ENCODE measurements at regions of chr9 and their contacts with region 1.

Region 1: DNA sequence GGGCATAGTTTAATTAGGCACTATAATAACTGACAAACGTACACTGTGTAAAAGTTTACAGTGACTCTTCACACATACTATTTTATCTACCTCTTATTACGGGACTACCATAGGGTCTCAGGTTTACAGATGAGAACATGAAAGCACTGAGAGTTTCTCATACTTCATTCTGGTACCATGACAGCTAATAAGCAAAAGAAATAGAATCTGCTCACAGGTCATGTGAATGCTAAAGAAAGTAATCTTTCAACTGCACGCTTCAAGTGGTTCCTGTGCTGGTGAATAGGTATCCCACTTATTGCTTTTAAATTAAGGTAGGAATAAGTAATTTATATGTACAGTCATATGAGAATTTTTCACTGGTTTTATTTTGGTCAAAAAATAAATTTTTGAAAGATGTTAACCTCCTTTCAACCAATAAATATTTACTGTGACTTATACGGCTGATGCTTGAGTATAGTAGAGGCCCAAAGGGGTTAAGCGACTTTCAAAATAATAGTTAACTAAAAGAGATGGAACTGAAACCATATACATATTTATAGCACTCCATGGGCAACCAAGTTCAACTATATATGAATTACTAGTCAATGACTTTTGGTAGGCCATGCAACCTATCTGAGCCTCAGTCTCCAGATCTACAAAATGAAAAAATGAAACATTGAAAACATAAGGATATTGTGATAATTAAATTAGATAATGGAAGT is 8.1 kb downstream of the CDKN2A start:
- DNase-seq: no peak
- H3K4me3 ChIP-seq: no peak overlapping the region
- H3K27ac ChIP-seq: no peak overlapping the region
- H3K4me1 ChIP-seq: peaks cover 18% of the 10 kb centered on the region
- H3K27me3 ChIP-seq: peaks cover 29 to 92% of the 10 kb centered on the region in 2 experiments
- CTCF ChIP-seq: no peak
- POLR2A ChIP-seq: no peak

Region 2: DNA sequence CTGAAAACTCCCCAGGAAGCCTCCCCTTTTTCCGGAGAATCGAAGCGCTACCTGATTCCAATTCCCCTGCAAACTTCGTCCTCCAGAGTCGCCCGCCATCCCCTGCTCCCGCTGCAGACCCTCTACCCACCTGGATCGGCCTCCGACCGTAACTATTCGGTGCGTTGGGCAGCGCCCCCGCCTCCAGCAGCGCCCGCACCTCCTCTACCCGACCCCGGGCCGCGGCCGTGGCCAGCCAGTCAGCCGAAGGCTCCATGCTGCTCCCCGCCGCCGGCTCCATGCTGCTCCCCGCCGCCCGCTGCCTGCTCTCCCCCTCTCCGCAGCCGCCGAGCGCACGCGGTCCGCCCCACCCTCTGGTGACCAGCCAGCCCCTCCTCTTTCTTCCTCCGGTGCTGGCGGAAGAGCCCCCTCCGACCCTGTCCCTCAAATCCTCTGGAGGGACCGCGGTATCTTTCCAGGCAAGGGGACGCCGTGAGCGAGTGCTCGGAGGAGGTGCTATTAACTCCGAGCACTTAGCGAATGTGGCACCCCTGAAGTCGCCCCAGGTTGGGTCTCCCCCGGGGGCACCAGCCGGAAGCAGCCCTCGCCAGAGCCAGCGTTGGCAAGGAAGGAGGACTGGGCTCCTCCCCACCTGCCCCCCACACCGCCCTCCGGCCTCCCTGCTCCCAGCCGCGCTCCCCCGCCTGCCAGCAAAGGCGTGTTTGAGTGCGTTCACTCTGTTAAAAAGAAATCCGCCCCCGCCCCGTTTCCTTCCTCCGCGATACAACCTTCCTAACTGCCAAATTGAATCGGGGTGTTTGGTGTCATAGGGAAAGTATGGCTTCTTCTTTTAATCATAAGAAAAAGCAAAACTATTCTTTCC is 11.3 kb before region 1 on chr9:
- CTCF ChIA-PET with region 1: interaction called, 12 read pairs
- POLR2A ChIA-PET with region 1: interaction called, 3 read pairs
- dilution Hi-C with region 1: no loop called
- intact Hi-C with region 1: loop called (anchors 1 kb)
- DNase-seq: peak; percentile 51
- H3K4me3 ChIP-seq: peak overlapping the region; percentile 31 to 51 (median 35)
- H3K27ac ChIP-seq: no peak overlapping the region
- H3K4me1 ChIP-seq: peaks cover 19% of the 10 kb centered on the region
- H3K27me3 ChIP-seq: peaks cover 77 to 99% of the 10 kb centered on the region in 2 experiments
- CTCF ChIP-seq: no peak
- POLR2A ChIP-seq: no peak

Measured in endothelial cell of umbilical vein (primary cell).